Dorsolateral prefrontal cortex (tissue), 120 donors: ENCODE measurements at regions of chr11 and their contacts with region 1.

Region 1: DNA sequence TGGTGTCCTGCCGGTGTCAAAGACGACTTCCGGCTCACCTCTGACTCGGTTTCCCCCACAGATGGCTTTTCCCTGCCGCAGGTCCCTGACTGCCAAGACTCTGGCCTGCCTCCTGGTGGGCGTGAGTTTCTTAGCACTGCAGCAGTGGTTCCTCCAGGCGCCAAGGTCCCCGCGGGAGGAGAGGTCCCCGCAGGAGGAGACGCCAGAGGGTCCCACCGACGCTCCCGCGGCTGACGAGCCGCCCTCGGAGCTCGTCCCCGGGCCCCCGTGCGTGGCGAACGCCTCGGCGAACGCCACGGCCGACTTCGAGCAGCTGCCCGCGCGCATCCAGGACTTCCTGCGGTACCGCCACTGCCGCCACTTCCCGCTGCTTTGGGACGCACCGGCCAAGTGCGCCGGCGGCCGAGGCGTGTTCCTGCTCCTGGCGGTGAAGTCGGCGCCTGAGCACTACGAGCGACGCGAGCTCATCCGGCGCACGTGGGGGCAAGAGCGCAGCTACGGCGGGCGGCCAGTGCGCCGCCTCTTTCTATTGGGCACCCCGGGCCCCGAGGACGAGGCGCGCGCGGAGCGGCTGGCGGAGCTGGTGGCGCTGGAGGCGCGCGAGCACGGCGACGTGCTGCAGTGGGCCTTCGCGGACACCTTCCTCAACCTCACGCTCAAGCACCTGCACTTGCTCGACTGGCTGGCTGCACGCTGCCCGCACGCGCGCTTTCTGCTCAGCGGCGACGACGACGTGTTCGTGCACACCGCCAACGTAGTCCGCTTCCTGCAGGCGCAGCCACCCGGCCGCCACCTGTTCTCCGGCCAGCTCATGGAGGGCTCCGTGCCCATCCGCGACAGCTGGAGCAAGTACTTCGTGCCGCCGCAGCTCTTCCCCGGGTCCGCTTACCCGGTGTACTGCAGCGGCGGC is 5.5 kb downstream of the B3GNT6 start:
- DNase-seq: peak in 2 of 10 donors; percentile 11 to 47
- H3K4me3 ChIP-seq: peak overlapping the region in 58 of 59 donors; percentile 16 to 69 (median 51)
- H3K27ac ChIP-seq: no peak overlapping the region
- H3K27me3 ChIP-seq: peaks cover 0 to 28% (median 10%) of the 10 kb centered on the region in 45 donors
- CTCF ChIP-seq: peak in 49 of 56 donors; percentile 19 to 60 (median 40)

Region 2: GRCh38 chr11:76734456-76735420 is 305.0 kb before region 1 on chr11:
- intact Hi-C with region 1: loop called (anchors 5 to 10 kb)
- DNase-seq: no peak
- H3K4me3 ChIP-seq: peak overlapping the region in 5 of 59 donors; percentile 7 to 22 (median 13)
- H3K27ac ChIP-seq: no peak overlapping the region
- H3K27me3 ChIP-seq: no peaks in the 10 kb centered on the region
- CTCF ChIP-seq: peak in 1 of 56 donors; percentile 7

Region 3: GRCh38 chr11:76807206-76807875 is 232.4 kb before region 1 on chr11:
- intact Hi-C with region 1: loop called (anchors 5 to 10 kb)
- DNase-seq: peak; percentile 79 to 89 (median 86)
- H3K4me3 ChIP-seq: peak overlapping the region in 30 of 59 donors; percentile 1 to 48 (median 26)
- H3K27ac ChIP-seq: peak overlapping the region in 5 of 59 donors; percentile 24 to 57 (median 29)
- H3K27me3 ChIP-seq: peaks cover 0 to 5% (median 0%) of the 10 kb centered on the region in 45 donors
- CTCF ChIP-seq: peak; percentile 69 to 96 (median 87)

Region 4: DNA sequence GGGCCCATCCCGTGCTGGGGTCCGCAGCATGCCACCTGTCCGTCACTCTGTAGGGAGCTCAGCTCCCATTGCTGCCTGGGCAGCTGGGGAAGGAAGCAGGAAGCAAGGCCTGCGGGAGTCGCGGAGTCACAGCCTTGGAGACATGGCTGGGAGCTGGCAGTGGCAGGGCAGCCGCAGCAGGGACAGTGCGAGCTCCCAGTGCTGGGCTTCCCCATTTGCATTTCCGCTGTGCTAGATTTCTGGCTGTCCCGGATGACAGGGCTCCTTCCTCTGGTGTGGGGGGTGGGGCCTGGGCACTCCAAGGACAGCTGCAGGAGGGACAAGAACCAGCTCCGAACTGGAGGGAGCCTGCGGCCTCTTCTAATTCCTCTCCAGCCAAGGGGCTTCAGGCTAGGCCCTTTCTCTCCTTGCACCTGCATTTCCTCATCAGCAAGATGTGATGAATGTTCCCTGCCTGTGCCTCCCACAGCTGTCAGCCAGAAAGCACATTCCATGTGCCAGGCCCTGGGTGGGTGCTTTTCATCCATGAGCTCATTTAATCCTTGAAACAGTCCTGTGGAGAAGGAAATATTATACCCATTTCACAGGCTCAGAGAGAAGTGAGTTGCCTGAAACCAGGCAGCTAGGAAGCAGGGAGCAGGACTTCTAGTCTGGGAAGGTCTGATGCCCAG is 136.3 kb after region 1 on chr11:
- intact Hi-C with region 1: no loop called
- DNase-seq: peak in 1 of 10 donors; percentile 61
- H3K4me3 ChIP-seq: peak overlapping the region in 26 of 59 donors; percentile 4 to 45 (median 27)
- H3K27ac ChIP-seq: peak overlapping the region in 19 of 59 donors; percentile 1 to 65 (median 31)
- H3K27me3 ChIP-seq: no peaks in the 10 kb centered on the region
- CTCF ChIP-seq: no peak

Region 5: GRCh38 chr11:77407618-77408017 is 367.9 kb after region 1 on chr11:
- intact Hi-C with region 1: loop called in 1 of 2 experiments (anchors 5 kb)
- DNase-seq: peak in 2 of 10 donors; percentile 54 to 71
- H3K4me3 ChIP-seq: peak overlapping the region in 17 of 59 donors; percentile 0 to 73 (median 25)
- H3K27ac ChIP-seq: peak overlapping the region in 2 of 59 donors; percentile 31 to 59
- H3K27me3 ChIP-seq: no peaks in the 10 kb centered on the region
- CTCF ChIP-seq: no peak